RWPE1 (cell line): ENCODE measurements at regions of chr2 and their contacts with region 1.

Region 1: GRCh38 chr2:205451901-205452512 is 230.3 kb upstream of the NRP2 start:
- DNase-seq: no peak
- H3K27ac ChIP-seq: no peak overlapping the region
- CTCF ChIP-seq: no peak

Region 2: GRCh38 chr2:205435970-205436369 is 16.0 kb before region 1 on chr2:
- CTCF ChIA-PET with region 1: no interaction called
- POLR2A ChIA-PET with region 1: interaction called, 10 read pairs
- DNase-seq: no peak
- H3K27ac ChIP-seq: no peak overlapping the region
- CTCF ChIP-seq: no peak

Region 3: DNA sequence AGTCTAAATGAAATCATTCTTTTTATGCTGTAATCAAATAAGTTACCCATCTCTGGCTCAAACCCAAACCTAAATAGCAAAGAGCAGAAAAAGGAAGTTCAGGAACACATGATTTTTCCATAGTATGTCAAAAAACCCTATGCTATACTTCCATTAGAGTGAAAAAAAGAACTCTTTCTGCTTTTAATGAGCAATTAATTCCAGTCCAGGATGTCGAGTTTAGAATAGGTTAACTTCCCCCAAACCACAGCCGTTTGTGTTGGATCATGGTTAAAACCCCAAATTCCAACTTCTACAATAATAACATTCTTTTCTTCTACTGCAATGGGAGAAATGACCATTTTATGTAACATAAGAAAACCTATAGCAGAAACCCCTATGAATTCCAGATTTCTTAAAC is 59.2 kb after region 1 on chr2:
- CTCF ChIA-PET with region 1: interaction called, 11 read pairs
- POLR2A ChIA-PET with region 1: no interaction called
- DNase-seq: no peak
- H3K27ac ChIP-seq: no peak overlapping the region
- CTCF ChIP-seq: no peak